HCT116 (cell line): ENCODE measurements at regions of chr16 and their contacts with region 1.

Region 1: DNA sequence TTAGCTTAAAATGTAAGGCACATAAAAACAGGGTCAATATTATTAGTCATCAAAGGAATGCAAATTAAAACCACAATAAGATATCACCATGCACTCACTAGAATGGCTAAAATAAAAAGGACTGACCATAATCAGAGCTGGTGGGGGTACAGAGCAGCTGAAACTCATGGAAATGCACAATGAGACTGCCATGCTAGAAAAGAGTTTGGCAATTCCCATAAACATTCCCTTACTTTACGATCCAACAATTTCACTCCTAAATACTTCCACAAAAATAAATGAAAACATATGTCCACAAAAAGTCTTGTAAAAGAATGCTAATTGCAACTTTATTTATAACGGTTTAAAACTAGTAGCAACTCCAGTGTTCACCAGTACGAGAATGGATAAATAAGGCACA is 36.1 kb upstream of the ERCC4 start:
- DNase-seq: no peak
- ATAC-seq: no peak
- H3K4me3 ChIP-seq: no peak overlapping the region
- H3K27ac ChIP-seq: no peak overlapping the region
- H3K4me1 ChIP-seq: no peaks in the 10 kb centered on the region
- H3K27me3 ChIP-seq: no peaks in the 10 kb centered on the region; the same call in 1 of the 2 replicates
- CTCF ChIP-seq: no peak
- POLR2A ChIP-seq: no peak
- RAD21 ChIP-seq: no peak

Region 2: DNA sequence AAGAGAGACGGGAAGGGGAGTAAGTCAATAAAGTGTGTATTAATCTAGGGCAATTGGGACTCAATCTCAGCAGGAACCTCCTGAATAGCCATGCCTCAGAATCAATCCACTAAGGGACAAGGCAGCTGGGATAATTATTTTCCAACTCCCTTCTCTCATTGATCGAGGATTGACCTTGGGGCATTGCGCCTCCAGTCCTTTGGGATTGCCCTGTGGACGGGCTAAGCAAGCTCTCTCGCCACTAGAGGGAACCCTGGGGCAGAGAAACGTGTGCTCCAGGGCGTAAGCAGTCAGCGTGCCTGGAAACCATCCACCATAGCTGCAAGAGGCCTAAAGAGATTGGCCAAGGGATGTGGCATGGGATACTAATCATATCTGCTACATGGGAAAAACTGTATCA is 17.8 kb before region 1 on chr16:
- CTCF ChIA-PET with region 1: interaction called, 13 read pairs
- POLR2A ChIA-PET with region 1: no interaction called
- RAD21 ChIA-PET with region 1: no interaction called
- intact Hi-C with region 1: loop called (anchors 1 kb)
- DNase-seq: peak; percentile 72
- ATAC-seq: peak; percentile 100
- H3K4me3 ChIP-seq: no peak overlapping the region
- H3K27ac ChIP-seq: no peak overlapping the region
- H3K4me1 ChIP-seq: no peaks in the 10 kb centered on the region
- H3K27me3 ChIP-seq: no peaks in the 10 kb centered on the region
- CTCF ChIP-seq: peak; percentile 58 to 93 (median 83); a peak in 5 of 6 replicates
- POLR2A ChIP-seq: no peak
- RAD21 ChIP-seq: peak; percentile 69